ENCODE measurements at regions of chr2 and their contacts with region 1.

Region 1: DNA sequence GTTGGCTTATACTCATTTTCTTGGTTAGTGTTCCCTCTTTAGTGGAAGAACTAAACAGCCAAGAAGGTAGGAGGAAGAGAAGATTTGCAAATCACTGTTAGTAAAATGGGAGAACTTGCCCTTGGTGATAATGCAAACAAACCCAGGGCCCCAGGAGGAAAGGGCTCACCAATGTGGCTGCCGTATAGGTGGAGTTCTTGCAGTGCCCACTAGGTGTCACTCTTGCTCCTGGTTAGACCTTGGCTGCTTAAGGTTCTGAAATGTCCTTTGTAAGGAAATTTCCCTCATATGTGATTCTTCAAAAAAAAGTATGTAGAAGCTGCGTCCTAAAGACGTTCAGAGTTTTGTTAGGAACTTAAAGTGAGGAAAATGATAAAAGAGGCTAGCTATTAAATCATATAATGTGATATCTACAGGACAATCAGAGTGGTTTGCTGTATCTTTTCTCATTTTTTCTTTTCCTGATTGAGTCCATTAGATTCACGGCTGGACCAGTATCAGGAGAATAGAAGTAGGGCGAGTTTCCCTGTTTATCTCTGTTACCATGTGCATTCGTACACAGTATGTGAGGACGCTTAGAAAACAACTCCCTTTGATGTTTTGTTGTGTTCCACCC is 48.6 kb downstream of the RPIA start:
- DNase-seq: peak; percentile 68
- CTCF ChIP-seq: peak; percentile 85

Region 2: GRCh38 chr2:88691339-88692183 is 48.5 kb before region 1 on chr2 and contains the start of gene RPIA:
- CTCF ChIA-PET with region 1: interaction called, 10 read pairs
- POLR2A ChIA-PET with region 1: no interaction called
- DNase-seq: peak; percentile 98
- CTCF ChIP-seq: peak; percentile 75

Region 3: GRCh38 chr2:88729061-88729745 is 10.9 kb before region 1 on chr2:
- CTCF ChIA-PET with region 1: interaction called, 12 read pairs
- POLR2A ChIA-PET with region 1: no interaction called
- DNase-seq: no peak
- CTCF ChIP-seq: no peak

Region 4: DNA sequence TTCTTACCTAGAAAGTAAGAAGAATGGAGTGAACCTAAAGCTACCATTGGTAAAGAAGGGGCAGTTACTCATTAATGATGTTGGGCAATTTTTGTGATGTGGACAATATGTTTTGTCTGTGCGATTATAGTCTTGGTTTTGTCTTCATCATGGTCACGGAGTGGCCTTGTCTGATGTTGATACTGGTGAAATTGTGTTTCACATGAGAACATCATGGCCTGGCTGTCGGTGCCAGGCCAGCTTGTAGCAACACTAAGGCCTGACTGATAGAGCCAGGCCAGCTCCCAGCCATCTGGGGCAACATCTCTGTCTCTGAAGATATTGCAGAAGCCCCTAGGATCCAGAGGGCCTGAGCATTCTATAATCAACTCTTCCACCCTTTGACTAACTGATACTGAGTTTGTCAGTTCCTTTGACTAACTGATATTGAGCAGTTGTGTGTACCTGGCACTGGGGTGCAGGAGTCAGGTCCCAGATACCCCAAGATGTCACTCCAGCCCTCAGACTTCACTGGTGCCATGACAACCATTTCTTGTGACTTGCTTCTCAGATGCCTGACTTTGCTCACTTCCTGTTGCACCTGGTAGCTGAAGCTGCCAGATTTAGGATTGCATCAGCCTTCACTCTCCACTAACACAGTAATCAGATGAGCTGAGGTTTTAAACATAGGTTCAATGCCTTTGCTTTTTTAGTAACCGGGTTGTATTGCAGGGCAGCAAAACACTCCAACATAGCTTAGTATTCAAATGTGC is 13.9 kb after region 1 on chr2:
- CTCF ChIA-PET with region 1: interaction called, 109 read pairs
- POLR2A ChIA-PET with region 1: no interaction called
- DNase-seq: peak; percentile 69
- CTCF ChIP-seq: no peak